AG04449 (cell line): ENCODE measurements at regions of chr1 and their contacts with region 1.

Region 1: DNA sequence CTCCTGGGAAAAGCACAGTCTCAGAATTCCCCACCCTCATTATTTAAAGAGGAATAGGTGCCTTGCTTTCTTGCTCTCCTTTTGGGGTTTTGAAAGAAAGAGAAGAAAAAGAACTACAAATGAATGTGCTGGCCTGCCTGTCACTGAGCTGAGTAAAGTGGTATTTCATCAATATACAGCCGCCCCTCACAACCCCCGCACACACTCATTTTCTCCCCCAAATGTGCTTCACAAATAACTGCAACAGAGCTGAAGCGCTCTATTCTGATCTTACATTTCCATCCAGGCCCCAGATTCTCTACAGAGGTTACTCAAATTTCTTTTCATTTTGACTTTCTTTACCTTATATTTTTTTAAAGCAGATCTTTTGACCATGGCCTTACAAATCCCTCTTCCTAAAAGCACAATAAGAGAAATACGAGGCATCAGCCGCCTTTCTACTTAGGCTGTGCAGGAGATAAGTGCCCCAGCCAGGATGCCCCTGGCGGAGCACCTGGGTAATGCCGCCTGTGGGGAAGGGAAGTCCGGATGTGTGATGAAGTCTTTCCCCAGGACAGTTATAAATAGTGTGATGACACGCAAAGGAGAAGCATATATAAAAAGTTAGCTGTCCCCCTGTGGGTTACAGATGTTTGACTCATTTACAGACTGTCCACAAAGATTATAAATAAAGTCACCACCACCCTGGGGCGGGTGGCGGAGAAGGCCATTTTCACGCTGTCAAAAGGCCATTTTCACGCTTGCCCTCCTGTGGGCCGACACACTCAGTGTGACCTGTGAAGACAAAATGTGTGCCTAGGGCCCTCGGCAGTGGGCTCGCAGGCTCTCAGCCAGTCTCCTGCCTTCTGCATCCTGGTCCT is 6.5 kb downstream of the KCNN3 start:
- DNase-seq: no peak
- H3K4me3 ChIP-seq: no peak overlapping the region
- CTCF ChIP-seq: peak; percentile 71

Region 2: GRCh38 chr1:154607609-154608396 is 255.7 kb before region 1 on chr1 and contains the start of gene ADAR:
- CTCF ChIA-PET with region 1: no interaction called
- POLR2A ChIA-PET with region 1: no interaction called
- DNase-seq: peak; percentile 94
- H3K4me3 ChIP-seq: peak within 1 kb of the TSS; percentile 83
- CTCF ChIP-seq: no peak

Region 3: GRCh38 chr1:154840269-154841176 is 23.0 kb before region 1 on chr1:
- CTCF ChIA-PET with region 1: interaction called, 12 read pairs
- POLR2A ChIA-PET with region 1: no interaction called
- DNase-seq: no peak
- H3K4me3 ChIP-seq: no peak overlapping the region
- CTCF ChIP-seq: no peak

Region 4: DNA sequence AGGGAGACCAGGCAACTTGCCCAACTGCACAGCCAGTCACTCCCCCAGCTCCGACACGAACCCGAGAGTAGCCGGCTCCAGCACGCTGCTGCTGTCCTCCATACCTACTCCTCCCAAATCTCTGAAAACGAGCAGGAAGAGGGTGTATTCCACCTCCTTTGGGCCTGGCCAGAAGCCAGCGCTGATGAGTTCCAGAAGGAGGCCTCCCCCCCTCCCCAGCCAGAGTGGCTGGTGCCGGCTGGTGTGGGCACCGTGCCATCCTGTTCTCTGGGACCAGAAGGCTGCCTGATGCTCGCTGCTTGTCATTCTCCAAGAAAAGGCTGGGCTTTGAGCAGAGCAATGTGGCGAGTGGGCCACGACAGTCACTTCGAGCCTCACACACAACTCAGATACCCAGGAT is 15.7 kb before region 1 on chr1:
- CTCF ChIA-PET with region 1: interaction called, 21 read pairs
- POLR2A ChIA-PET with region 1: no interaction called
- DNase-seq: no peak
- H3K4me3 ChIP-seq: no peak overlapping the region
- CTCF ChIP-seq: no peak

Region 5: GRCh38 chr1:154878371-154879022 is 15.0 kb after region 1 on chr1:
- CTCF ChIA-PET with region 1: interaction called, 67 read pairs
- POLR2A ChIA-PET with region 1: no interaction called
- DNase-seq: no peak
- H3K4me3 ChIP-seq: no peak overlapping the region
- CTCF ChIP-seq: peak; percentile 94